ENCODE measurements at regions of chr1 and their contacts with region 1.

Region 1: GRCh38 chr1:90964444-90965035 is 57.3 kb downstream of the ZNF644 start:
- DNase-seq: no peak

Region 2: DNA sequence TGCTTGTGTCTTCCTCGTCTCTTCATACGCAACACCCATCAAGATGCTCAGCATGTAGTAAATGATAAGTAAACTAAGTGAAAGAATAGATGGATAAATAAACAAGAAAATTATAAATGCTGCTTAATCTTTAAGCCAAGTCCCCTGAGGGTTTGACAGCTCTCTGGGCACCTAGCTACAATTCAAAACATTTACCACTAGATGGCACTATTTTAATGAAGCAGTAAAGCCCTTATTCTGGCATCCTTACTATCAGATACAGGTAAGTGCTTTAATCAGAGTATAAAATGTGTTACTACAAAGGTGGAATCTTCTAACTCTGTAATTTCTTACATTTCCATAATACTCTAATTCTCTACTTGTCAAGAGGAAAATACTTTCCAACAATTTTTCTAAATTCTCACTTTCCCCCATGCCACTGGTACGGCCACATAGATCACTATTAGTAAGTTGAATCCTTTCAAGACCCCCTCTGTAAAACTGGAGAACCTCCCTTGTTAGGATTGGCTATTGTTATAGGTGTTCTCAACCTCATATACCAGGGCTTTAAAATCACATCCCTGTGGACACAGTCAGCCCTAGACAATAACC is 385.2 kb before region 1 on chr1:
- intact Hi-C with region 1: loop called (anchors 5 kb)
- DNase-seq: no peak

Region 3: GRCh38 chr1:90721210-90722194 is 243.0 kb before region 1 on chr1:
- intact Hi-C with region 1: loop called (anchors 5 kb)
- DNase-seq: peak in 3 of 10 donors; percentile 15 to 88 (median 66)

Region 4: DNA sequence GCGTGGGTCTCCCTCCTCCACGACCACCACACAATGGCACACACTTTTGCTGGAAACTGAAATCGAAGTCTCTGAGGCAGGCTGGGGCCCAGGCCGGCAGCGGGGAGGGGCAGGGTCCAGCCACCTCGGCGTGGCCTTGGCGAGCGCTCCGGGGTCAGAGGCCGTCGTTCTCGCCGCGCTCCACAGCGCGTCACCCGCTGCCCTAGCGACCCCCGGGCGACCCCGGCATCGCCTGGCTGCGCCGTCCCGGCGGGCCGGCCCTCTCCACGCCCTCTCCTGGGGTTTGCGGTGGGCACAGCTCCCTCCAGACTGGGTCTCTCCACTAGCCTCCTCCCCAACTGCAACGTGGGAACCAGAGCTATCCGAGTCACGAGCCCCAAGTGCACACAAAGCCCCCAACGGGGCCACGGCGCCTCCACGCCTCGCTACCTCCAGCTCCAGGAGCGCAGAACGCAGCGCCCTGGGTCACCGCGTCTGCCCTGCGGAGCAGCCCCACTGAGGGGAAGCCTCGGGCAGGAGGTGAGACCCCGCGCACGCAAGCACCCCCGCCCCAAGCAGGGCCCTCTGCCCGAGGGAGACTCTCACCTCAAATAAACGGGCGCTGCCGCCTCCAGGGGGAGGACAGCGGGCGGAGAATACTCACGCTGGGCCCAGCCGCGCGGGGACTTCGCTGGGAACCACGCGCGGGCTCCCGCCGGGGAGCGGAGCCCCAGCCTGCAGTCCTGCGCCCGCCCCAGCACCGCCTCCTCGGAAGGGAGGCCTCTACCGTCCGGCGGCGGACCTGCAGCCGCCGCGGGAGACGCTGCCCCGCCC is 113.4 kb before region 1 on chr1:
- intact Hi-C with region 1: loop called (anchors 10 kb)
- DNase-seq: peak; percentile 51 to 96 (median 76)

Region 5: GRCh38 chr1:91021686-91022517 is 57.4 kb after region 1 on chr1 and contains the start of gene ZNF644:
- intact Hi-C with region 1: loop called (anchors 10 kb)
- DNase-seq: peak; percentile 88 to 99 (median 92)